Activated B cell treated with CpG ODN at 0.5 μM for 24 hours (primary cell): ENCODE measurements at regions of chr4 and their contacts with region 1.

Region 1: DNA sequence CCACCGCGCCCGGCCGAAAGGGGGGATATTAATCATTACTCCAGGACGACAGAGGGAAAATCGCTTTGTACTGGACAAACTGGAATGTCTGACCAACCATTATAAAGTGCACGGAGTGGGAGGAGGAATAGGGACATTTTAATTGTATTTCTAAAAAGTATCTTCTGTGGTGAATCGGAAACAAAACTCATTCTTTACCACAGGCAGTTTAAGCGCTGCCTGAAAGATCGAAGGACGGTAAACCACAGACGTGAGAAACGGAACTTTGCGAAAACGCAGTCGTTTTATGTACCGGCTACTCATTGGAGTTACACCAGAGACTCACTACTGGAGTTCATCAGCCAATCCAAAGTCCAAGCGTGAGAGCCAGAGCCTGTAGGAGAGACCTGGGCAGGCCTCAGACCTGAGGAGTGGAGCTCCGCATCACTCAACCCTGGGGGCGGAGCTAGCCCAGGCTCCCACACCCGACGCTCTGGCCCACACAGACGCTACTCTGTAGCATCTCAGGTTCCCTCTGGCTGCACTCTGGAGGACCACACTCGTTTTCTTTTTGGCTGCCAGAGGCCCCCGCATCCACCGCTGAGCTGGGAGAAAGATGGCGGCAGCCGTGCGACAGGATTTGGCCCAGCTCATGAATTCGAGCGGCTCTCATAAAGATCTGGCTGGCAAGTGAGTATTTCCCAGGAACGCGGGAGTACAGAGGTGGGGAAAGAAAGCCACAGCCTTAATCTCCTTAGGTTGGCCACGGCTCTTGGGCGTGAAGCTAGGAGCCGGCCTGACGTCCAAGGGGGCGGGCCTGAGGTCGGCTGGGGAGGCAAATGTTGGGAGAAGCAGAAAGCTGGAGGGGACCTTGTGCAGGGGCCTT is at the start of gene COPS4:
- DNase-seq: peak; percentile 82
- ATAC-seq: peak; percentile 96
- H3K4me3 Mint-ChIP-seq: peak within 1 kb of the TSS; percentile 99
- H3K27ac Mint-ChIP-seq: peak within 1 kb of the TSS; percentile 100
- H3K4me1 Mint-ChIP-seq: peaks cover 31% of the 10 kb centered on the region
- H3K27me3 Mint-ChIP-seq: no peaks in the 10 kb centered on the region
- CTCF ChIP-seq: no peak
- total RNA-seq, gene COPS4: 32.7 and 36.7 TPM in 2 replicates

Region 2: DNA sequence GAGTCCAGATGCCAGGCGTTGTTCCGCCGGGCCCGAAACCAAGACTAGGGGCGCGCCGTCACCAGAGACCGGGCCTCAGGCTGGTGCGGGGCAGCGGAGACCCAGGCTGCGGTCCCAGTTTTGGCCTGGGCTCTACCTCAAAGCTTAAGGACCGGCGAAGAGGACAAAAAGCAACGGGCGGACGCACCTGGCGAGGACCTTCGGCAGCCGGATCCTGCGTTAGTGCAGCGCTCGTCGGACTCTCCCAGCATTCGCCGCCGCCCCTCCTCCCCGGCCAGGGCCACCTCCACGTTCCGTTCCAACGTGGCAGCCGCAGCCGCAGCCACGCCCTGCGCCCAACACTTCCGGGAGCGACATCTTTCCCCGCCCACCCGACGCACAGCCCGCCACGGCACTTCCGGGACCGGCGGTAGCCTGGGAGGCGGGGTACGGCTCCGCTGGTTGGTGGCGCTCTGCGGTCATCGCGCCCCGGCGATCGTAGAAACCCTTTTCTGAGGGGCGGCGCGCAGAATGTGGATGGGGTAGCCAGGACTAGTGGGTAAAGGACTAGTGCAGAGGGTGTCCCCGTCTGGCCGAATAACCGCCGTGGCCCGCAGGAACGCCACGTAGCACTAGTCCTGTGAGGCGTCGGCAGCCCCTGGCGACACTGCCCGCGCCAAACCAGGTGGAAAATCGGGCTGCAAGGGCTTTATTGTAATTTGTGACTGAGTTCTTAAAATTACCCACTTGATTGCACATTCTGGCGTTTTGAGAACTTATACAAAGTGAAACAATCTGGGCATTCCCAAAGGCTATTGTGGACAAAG is 143.8 kb before region 1 on chr4 and contains the start of gene SEC31A:
- CTCF ChIA-PET with region 1: no interaction called
- POLR2A ChIA-PET with region 1: interaction called, 5 read pairs
- intact Hi-C with region 1: loop called (anchors 1 kb)
- DNase-seq: peak; percentile 97
- ATAC-seq: peak; percentile 92
- H3K4me3 Mint-ChIP-seq: peak within 1 kb of the TSS; percentile 93
- H3K27ac Mint-ChIP-seq: peak within 1 kb of the TSS; percentile 94
- H3K4me1 Mint-ChIP-seq: peaks cover 34% of the 10 kb centered on the region
- H3K27me3 Mint-ChIP-seq: no peaks in the 10 kb centered on the region
- CTCF ChIP-seq: no peak
- total RNA-seq, gene SEC31A: 154 and 172 TPM in 2 replicates

Region 3: DNA sequence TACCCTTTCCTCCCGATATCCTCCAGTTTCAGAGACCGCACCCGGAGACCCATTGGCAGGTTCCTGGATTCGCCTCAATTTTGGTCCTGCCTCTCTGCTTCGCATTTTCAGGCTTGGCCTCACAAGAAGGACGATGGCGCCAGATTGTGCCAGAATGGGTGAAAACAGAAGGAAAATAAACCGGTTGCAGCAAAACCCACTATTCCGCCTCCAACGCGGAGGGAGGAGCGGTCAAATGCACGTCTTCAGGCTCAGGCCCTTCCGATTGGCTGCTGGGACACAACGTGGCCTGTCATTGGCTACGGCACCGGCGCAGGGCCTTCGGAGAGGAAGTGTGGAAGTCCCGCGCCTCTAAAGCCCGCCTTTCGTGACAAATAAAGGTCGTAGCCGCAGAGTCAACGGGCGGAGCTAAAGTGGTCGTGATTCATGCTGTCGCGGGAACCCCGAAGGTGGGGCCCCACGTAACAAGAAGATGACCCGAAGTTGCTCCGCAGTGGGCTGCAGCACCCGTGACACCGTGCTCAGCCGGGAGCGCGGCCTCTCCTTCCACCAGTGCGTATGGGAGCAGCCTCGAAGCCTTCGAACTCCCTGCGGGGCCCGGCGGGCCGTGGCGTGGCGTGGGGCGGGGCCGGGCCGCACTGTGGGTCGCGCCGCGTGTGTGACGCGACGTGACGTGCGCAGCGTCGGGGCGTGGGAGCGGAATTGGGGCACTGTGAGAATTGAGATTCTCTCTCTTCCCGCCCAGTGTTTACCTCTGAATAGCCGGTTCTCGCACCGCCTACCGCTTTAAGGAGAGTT is 134.3 kb before region 1 on chr4 and contains the start of gene THAP9:
- CTCF ChIA-PET with region 1: no interaction called
- POLR2A ChIA-PET with region 1: interaction called, 33 read pairs
- intact Hi-C with region 1: loop called (anchors 1 kb)
- DNase-seq: peak; percentile 92
- ATAC-seq: peak; percentile 90
- H3K4me3 Mint-ChIP-seq: no peak within 1 kb of the TSS
- H3K27ac Mint-ChIP-seq: no peak within 1 kb of the TSS
- H3K4me1 Mint-ChIP-seq: peaks cover 20% of the 10 kb centered on the region
- H3K27me3 Mint-ChIP-seq: no peaks in the 10 kb centered on the region
- CTCF ChIP-seq: no peak
- total RNA-seq, gene THAP9: 2.1 and 3.1 TPM in 2 replicates

Region 4: DNA sequence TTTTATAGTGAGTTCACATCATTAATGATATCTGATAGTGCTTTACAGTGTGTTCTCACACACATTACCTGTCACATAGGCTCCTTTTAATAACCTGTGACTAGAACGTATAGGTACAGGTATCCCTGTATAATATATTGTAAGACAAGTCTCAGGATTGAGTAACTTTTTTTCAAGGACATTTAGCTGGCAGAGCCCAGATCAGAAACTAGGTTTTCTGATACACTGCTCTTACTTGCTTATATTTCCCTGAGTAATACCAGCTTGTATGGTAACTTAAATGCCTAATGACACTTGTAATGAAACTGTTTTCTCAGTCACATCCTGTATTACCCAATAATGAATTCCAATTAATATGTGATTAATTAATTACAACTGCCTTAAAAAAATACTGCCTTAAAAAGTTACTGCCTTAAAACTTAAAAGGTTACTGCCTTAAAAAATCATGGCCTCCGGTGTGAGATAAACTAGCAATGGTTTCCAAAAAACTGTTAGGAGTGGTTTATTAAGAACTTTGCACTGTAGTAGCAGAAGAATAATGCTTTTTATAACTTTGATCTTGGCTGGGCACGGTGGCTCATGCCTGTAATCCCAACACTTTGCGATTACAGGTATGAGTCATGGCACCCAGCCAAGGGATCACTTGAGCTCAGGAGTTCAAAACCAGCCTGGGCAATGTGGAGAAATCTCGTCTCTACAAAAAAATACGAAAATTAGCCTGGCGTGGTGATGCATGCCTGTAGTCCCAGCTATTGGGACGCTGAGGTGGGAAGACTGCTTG is 12.0 kb after region 1 on chr4:
- CTCF ChIA-PET with region 1: no interaction called
- POLR2A ChIA-PET with region 1: interaction called, 10 read pairs
- intact Hi-C with region 1: loop called (anchors 1 kb)
- DNase-seq: no peak
- ATAC-seq: no peak
- H3K4me3 Mint-ChIP-seq: no peak overlapping the region
- H3K27ac Mint-ChIP-seq: no peak overlapping the region
- H3K4me1 Mint-ChIP-seq: peaks cover 5% of the 10 kb centered on the region
- H3K27me3 Mint-ChIP-seq: no peaks in the 10 kb centered on the region
- CTCF ChIP-seq: no peak

Region 5: GRCh38 chr4:83484500-83485461 is 449.9 kb after region 1 on chr4 and contains the start of gene ABRAXAS1:
- CTCF ChIA-PET with region 1: no interaction called
- POLR2A ChIA-PET with region 1: interaction called, 7 read pairs
- intact Hi-C with region 1: loop called (anchors 1 kb)
- DNase-seq: peak; percentile 96
- ATAC-seq: peak; percentile 97
- H3K4me3 Mint-ChIP-seq: peak within 1 kb of the TSS; percentile 93
- H3K27ac Mint-ChIP-seq: peak within 1 kb of the TSS; percentile 94
- H3K4me1 Mint-ChIP-seq: peaks cover 19% of the 10 kb centered on the region
- H3K27me3 Mint-ChIP-seq: no peaks in the 10 kb centered on the region
- CTCF ChIP-seq: no peak
- total RNA-seq, gene ABRAXAS1: 23.5 and 24.2 TPM in 2 replicates

Region 6: DNA sequence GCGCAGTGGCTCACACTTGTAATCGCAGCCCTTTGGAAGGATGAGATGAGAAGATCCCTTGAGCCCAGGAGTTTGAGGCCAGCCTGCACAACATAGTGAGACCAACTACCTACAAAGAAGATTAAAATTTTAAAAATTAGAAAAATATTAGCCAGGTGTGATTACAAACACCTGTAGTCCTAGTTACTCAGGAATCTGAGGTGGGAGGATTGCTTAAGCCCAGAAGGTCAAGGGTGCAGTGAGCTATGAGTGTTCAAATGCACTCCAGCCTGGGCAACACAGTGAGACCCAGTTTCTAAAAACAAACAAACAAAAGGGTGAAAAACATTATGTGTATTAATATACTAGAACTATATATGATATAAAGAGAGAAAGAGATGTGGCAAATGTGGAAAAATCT is 1501.0 kb after region 1 on chr4:
- CTCF ChIA-PET with region 1: no interaction called
- POLR2A ChIA-PET with region 1: no interaction called
- intact Hi-C with region 1: no loop called
- DNase-seq: no peak
- ATAC-seq: no peak
- H3K4me3 Mint-ChIP-seq: no peak overlapping the region
- H3K27ac Mint-ChIP-seq: no peak overlapping the region
- H3K4me1 Mint-ChIP-seq: no peaks in the 10 kb centered on the region
- H3K27me3 Mint-ChIP-seq: peaks cover 2% of the 10 kb centered on the region
- CTCF ChIP-seq: no peak